Sciatic nerve (tissue), 2 donors: ENCODE measurements at regions of chr22 and their contacts with region 1.

Region 1: DNA sequence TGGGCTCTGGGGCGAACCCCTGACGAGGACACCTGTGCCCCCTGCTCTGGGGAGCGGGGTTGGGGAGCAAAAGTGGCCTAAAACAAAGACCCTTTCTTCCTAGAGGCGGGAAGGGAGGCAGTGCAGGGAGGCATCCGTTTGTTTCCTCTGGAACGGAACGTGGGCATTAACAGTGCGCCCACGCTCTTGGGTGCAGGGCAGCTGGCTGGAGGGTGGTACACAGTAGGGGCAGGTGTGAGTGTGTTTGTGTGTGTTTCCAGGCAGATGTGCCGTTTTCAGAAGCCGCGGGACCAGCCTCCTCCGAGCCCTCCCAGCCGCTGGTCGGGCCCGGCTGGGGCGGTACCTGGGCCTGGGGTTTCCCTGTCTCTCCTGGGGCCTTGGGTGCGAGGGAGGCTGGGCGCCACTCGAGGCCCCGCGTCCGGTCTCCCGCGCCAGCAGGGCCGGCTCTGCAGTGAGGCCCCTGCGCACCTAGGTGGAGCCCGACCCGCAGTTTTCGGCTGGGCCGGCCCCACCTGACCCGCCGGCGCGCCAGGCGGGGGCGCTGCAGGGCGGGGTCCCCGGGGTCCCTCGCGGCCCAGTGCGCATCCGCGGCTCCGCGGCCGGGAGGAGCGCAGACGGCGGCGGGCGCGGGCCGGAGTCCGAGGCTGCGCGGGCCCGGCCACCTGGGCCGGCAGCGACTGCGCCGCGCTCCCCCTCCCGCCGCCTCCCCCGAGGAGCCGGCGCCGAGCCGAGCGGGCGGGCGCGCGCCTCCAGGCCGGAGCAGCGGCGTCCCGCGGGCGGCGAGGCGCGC is 1252.7 kb downstream of the BRD1 start:
- DNase-seq: peak; percentile 73
- ATAC-seq: peak; percentile 57

Region 2: GRCh38 chr22:49303781-49304461 is 729.0 kb after region 1 on chr22:
- intact Hi-C with region 1: loop called (anchors 5 kb)
- DNase-seq: peak; percentile 39
- ATAC-seq: no peak